ENCODE measurements at regions of chr2 and their contacts with region 1.

Region 1: DNA sequence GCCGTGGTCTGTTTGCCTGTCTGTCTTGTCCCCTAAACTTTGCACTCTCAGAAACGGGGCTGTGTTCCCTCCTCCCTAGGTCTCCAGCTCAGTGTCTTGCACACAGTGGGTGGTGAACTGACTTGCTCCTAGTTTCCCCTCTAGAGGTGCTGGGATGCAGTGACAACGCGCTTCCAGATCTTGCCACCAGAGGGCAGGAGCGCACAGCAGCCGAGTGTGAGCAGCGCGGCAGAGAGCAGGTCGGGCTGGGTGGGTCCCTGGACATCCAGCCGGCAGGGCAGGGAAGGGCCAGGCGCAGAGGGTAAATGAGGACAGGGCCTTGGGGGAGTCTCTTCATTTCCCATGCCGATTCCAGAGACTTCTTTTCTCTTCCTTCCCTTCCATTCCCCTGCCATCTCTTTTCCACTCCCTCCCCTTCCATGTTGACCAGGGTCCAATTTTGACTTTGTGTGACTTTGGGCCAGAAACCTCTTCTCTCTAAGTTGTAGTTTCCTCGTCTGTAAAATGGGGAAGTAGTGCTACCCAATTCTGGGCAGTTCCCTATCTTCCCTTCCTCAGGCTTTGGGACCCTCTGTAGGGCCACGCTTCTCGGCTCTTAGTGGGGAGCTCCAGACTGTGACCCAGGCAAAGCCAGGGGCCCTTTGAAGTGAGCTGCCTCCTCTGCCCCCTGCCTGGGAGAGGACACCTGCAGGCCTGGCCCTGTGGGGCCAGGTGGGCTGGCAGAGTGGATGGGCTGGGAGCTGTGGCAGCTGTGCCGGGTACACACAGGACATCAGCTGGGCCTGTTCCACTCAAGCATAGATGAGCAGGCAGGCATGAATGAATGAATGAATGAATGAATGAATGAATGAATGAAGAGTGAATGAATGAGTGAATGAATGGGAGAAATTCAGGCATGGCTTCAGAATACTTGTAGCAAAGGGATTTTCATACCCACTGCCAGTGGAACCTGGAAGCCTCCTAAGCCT is 43.3 kb upstream of the TAF1B start:
- DNase-seq: peak; percentile 47
- ATAC-seq: peak; percentile 93
- H3K4me3 ChIP-seq: no peak overlapping the region; the same call in 1 of the 2 replicates
- H3K27ac ChIP-seq: no peak overlapping the region
- H3K4me1 ChIP-seq: peaks cover 11% of the 10 kb centered on the region
- H3K27me3 ChIP-seq: no peaks in the 10 kb centered on the region; a peak in 1 of 4 replicates
- CTCF ChIP-seq: peak; percentile 97 to 100 (median 98)
- EP300 ChIP-seq: no peak
- POLR2A ChIP-seq: no peak
- RAD21 ChIP-seq: peak; percentile 84

Region 2: DNA sequence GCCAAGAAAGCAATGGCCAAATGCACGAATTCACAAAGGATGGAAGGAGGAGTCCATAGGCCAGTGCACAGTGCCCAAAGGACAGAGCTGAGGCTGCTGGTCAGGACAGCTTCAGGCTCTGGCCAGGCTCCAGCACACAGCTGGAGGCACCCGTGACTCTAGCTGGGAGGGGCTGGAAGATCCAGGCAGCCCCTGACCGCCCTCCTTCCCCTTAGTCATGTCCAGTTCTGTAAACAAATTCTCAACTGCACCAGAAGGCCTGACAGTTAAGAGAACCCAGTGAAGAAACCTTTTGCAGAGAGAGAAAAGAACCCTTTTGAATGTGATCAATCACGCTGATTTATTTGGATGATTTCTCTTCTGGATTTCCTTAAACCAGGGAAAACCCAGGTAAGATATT is 161.4 kb before region 1 on chr2:
- CTCF ChIA-PET with region 1: no interaction called
- POLR2A ChIA-PET with region 1: no interaction called
- RAD21 ChIA-PET with region 1: no interaction called
- SMC1A ChIA-PET with region 1: no interaction called
- in situ Hi-C with region 1: no loop called
- intact Hi-C with region 1: no loop called
- DNase-seq: no peak
- ATAC-seq: no peak
- H3K4me3 ChIP-seq: no peak overlapping the region
- H3K27ac ChIP-seq: no peak overlapping the region
- H3K4me1 ChIP-seq: peaks cover 15% of the 10 kb centered on the region
- H3K27me3 ChIP-seq: peaks cover 0 to 2% of the 10 kb centered on the region in 2 experiments; a peak in 2 of 4 replicates
- CTCF ChIP-seq: no peak
- EP300 ChIP-seq: no peak
- POLR2A ChIP-seq: no peak
- RAD21 ChIP-seq: no peak

Region 3: DNA sequence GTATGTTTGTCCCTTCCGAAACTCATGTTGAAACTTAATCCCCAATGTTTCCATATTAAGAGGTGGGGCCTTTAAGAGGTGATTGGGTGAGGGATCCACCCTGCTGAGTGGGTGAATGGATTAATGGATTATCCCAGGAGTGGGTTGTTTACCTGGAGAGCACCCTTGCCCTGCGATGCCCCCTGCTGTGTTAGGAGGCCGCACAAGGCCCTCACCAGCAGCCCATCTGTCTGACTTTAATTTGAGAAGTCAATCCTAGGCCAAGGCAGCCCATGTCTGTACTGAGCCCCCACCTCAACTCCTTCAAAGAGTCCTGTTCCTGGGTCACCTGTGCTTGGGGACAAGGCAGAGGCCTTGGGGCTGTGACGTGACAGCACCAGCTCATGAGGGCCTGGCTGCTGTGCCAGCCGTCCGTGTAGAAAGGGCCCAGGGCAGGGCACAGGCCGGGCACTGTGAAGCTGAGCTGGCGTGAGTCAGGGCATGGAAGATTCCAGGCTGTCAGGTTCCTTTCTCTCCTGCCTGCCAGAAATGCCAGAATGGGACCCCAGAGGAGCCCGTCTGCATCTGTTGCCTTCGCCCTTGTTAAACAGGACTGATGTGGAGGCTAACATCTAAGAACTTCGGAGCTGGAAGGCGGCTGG is 22.0 kb after region 1 on chr2:
- CTCF ChIA-PET with region 1: no interaction called
- POLR2A ChIA-PET with region 1: no interaction called
- RAD21 ChIA-PET with region 1: no interaction called
- SMC1A ChIA-PET with region 1: no interaction called
- in situ Hi-C with region 1: no loop called
- intact Hi-C with region 1: no loop called
- DNase-seq: no peak
- ATAC-seq: no peak
- H3K4me3 ChIP-seq: no peak overlapping the region
- H3K27ac ChIP-seq: no peak overlapping the region
- H3K4me1 ChIP-seq: no peaks in the 10 kb centered on the region
- H3K27me3 ChIP-seq: no peaks in the 10 kb centered on the region
- CTCF ChIP-seq: no peak
- EP300 ChIP-seq: no peak
- POLR2A ChIP-seq: no peak
- RAD21 ChIP-seq: no peak

Region 4: DNA sequence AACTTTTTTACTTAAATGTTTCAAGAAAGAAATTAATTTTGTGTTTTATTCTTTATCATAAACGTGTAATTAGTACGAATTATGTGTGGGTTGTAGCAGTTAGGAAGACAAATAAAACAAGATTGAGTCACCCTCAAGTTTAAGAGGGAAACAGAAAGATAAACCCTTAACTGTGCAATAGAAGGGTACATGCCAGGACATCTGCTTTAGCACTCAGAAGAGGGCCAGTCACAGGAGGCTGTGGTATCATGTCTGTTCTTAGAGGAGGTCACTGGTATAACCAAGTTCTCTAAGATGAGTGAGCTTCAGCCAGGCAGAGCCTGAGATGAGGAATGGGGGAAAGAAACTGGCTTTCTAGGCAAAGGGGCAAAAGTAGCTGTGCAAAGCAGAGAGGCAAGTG is 109.2 kb after region 1 on chr2:
- CTCF ChIA-PET with region 1: interaction called, 37 read pairs
- POLR2A ChIA-PET with region 1: interaction called, 3 read pairs
- RAD21 ChIA-PET with region 1: interaction called, 23 read pairs
- SMC1A ChIA-PET with region 1: interaction called, 11 read pairs
- in situ Hi-C with region 1: no loop called
- intact Hi-C with region 1: loop called (anchors 2 kb)
- DNase-seq: no peak
- ATAC-seq: no peak
- H3K4me3 ChIP-seq: no peak overlapping the region
- H3K27ac ChIP-seq: no peak overlapping the region
- H3K4me1 ChIP-seq: peaks cover 2% of the 10 kb centered on the region
- H3K27me3 ChIP-seq: no peaks in the 10 kb centered on the region
- CTCF ChIP-seq: no peak
- EP300 ChIP-seq: no peak
- POLR2A ChIP-seq: no peak
- RAD21 ChIP-seq: no peak

Region 5: DNA sequence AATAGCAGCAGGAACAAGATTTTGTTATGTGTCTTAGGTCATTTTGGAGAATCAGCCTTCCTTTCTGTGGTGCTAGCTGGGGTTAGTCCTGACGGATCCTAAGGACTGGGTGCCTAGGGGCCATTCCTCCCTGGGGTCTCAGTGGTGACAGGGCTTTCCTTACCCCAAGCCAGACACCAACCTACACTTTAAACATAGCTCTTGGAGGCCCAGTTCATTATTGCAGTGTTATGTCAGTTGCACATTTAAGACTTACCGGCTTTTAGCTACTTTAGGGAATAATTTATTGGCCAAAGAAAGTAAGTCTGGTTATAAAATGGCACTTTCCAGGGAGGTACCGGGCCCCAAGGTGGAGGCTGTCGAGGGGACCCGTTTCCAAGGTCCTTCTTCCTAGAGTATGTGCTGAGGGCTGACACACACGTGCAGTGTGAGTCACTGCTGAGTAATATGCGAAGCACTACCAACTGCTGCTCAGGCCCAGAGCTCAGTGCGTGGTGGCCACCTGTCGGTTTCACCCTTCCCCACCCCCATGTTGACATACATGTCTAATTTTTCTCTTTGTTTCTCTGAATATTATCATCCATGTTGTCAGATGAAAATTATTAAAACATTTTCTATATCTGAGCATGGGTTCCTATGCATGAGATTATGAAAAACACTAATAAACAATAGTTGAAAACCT is 114.6 kb after region 1 on chr2:
- CTCF ChIA-PET with region 1: interaction called, 37 read pairs
- POLR2A ChIA-PET with region 1: interaction called, 3 read pairs
- RAD21 ChIA-PET with region 1: interaction called, 23 read pairs
- SMC1A ChIA-PET with region 1: interaction called, 11 read pairs
- in situ Hi-C with region 1: no loop called
- intact Hi-C with region 1: loop called (anchors 2 kb)
- DNase-seq: peak; percentile 45
- ATAC-seq: peak; percentile 100
- H3K4me3 ChIP-seq: no peak overlapping the region
- H3K27ac ChIP-seq: peak overlapping the region; percentile 27; the same call in 1 of the 2 replicates
- H3K4me1 ChIP-seq: peaks cover 9% of the 10 kb centered on the region
- H3K27me3 ChIP-seq: no peaks in the 10 kb centered on the region
- CTCF ChIP-seq: peak; percentile 44 to 78 (median 44); a peak in 5 of 6 replicates
- EP300 ChIP-seq: peak; percentile 39 to 53; a peak in 1 of 4 replicates
- POLR2A ChIP-seq: no peak
- RAD21 ChIP-seq: peak; percentile 67

Region 6: DNA sequence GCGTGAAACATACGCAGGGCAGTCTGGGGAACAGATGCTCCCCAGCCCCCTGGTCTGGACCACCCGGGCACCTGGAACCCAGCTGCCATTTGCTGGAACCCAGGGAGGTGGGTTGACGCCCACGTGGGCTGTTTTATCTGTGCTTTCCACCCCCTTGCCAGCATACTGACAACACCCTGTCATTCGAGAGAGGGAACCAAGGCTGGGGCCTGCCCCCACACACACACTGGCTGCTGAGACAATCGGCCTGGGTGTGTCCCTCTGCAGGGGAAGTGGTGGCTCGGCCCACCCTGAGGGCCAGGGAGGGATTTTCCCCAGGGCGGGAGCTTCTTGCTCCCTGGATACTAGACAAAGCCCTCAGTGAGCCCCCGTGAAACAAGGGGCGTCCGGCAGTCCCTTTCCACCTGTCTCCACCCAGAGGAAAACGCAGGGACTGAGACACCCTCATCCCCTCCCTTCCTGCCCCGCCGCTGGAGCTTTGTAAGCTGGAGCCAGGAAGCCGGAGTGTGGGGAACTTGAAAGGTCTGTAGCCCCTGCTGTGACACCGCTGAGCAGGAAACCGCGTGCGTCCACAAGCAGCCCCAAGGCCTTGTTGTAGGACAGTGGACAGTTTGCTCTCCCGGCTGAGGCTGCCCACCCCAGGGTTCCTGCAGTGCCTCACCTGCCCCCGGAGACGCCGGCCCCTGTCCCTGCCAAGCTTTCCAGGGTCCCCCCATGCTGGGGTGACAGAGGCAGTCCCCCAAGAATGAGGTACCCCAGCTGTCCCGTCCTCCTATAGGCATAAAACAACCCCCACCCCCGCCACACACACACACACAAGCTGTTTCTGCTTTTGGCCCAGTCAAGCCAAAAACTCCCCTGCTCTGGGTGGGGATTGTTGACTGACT is 229.3 kb after region 1 on chr2:
- CTCF ChIA-PET with region 1: interaction called, 15 read pairs
- POLR2A ChIA-PET with region 1: no interaction called
- RAD21 ChIA-PET with region 1: interaction called, 5 read pairs
- SMC1A ChIA-PET with region 1: interaction called, 4 read pairs
- in situ Hi-C with region 1: no loop called
- intact Hi-C with region 1: no loop called
- DNase-seq: no peak
- ATAC-seq: peak; percentile 89
- H3K4me3 ChIP-seq: no peak overlapping the region
- H3K27ac ChIP-seq: no peak overlapping the region
- H3K4me1 ChIP-seq: peaks cover 11% of the 10 kb centered on the region
- H3K27me3 ChIP-seq: no peaks in the 10 kb centered on the region
- CTCF ChIP-seq: 0 out of 6 replicates have a peak, but pooled peaks of 1 of the 3 experiments have one; percentile 3
- EP300 ChIP-seq: no peak
- POLR2A ChIP-seq: no peak
- RAD21 ChIP-seq: no peak